CD4-positive, alpha-beta T cell (primary cell): ENCODE measurements at regions of chr2 and their contacts with region 1.

Region 1: DNA sequence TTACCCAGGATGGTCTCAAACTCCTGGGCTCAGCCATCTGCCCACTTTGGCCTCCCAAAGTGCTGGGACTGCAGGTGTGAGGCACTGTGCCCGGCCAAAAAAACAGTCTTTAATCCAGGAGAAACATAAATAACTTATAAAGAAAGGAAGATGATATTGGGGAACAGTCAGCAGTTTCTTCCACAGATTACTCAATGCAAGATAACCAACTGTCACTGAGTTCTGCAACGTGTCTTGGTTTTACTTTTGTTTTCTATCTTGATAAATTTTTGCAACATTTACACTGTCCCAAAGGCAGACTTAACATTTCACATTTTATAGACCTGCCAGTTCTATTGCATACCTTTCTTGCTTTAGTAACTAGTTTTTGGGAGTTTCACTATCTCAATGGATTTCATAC is 71.1 kb downstream of the ANKRD44 start:
- DNase-seq: peak in 3 of 14 experiments; percentile 49 to 65 (median 51)
- ATAC-seq: peak; percentile 32
- H3K4me3 ChIP-seq: peak overlapping the region; percentile 32
- H3K4me3 Mint-ChIP-seq: peak overlapping the region; percentile 88
- H3K27ac ChIP-seq: peak overlapping the region; percentile 74 to 75
- H3K27ac Mint-ChIP-seq: peak overlapping the region; percentile 91
- H3K4me1 ChIP-seq: peaks cover 77% of the 10 kb centered on the region
- H3K4me1 Mint-ChIP-seq: peaks cover 95% of the 10 kb centered on the region
- H3K27me3 ChIP-seq: no peaks in the 10 kb centered on the region
- H3K27me3 Mint-ChIP-seq: no peaks in the 10 kb centered on the region
- CTCF ChIP-seq: no peak

Region 2: DNA sequence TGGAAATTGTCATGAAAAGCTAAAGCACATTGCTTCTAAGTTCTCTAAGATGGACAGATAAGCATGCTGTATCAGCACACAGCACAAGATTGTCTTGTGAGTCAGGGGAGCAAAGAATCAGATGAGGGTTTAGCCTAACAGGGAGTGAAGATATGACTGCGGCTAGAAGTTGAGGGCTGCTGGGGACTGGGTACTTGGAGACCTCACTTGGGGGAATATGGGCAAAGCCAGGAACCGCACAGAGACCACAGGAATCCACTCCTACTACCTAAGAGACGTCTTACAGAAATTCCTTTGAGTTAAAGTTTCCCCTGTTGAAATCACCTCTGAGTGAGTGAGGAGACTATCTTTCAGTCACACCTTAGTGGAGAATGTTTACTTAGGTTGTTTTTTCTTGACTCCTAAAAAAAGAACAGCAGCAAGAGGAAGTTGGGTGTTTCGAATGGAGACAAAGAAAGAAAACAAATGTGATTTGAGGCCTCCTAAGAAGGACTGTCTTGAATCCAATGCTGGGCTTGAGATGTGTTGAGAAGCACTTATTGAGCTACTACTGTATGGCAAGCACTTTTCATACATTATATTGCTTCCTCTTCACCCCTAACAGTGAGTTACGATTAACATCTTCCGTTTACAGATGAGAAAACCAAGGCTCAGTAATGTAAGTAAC is 29.6 kb before region 1 on chr2:
- CTCF ChIA-PET with region 1: interaction called, 5 read pairs
- POLR2A ChIA-PET with region 1: interaction called, 38 read pairs
- intact Hi-C with region 1: loop called in 1 of 2 experiments (anchors 2 kb)
- DNase-seq: peak in 7 of 14 experiments; percentile 25 to 79 (median 45)
- ATAC-seq: peak; percentile 8
- H3K4me3 ChIP-seq: peak overlapping the region; percentile 15
- H3K4me3 Mint-ChIP-seq: peak overlapping the region; percentile 73
- H3K27ac ChIP-seq: peak overlapping the region; percentile 79 to 86
- H3K27ac Mint-ChIP-seq: peak overlapping the region; percentile 98
- H3K4me1 ChIP-seq: peaks cover 86% of the 10 kb centered on the region
- H3K4me1 Mint-ChIP-seq: peaks cover 98% of the 10 kb centered on the region
- H3K27me3 ChIP-seq: no peaks in the 10 kb centered on the region
- H3K27me3 Mint-ChIP-seq: no peaks in the 10 kb centered on the region
- CTCF ChIP-seq: no peak

Region 3: GRCh38 chr2:197223451-197223850 is 16.0 kb before region 1 on chr2:
- CTCF ChIA-PET with region 1: interaction called, 7 read pairs
- POLR2A ChIA-PET with region 1: interaction called, 12 read pairs
- intact Hi-C with region 1: loop called (anchors 2 kb)
- DNase-seq: no peak
- ATAC-seq: no peak
- H3K4me3 ChIP-seq: no peak overlapping the region
- H3K4me3 Mint-ChIP-seq: peak overlapping the region; percentile 28
- H3K27ac ChIP-seq: no peak overlapping the region
- H3K27ac Mint-ChIP-seq: peak overlapping the region; percentile 81
- H3K4me1 ChIP-seq: peaks cover 40% of the 10 kb centered on the region
- H3K4me1 Mint-ChIP-seq: peaks cover 84% of the 10 kb centered on the region
- H3K27me3 ChIP-seq: no peaks in the 10 kb centered on the region
- H3K27me3 Mint-ChIP-seq: no peaks in the 10 kb centered on the region
- CTCF ChIP-seq: no peak

Region 4: DNA sequence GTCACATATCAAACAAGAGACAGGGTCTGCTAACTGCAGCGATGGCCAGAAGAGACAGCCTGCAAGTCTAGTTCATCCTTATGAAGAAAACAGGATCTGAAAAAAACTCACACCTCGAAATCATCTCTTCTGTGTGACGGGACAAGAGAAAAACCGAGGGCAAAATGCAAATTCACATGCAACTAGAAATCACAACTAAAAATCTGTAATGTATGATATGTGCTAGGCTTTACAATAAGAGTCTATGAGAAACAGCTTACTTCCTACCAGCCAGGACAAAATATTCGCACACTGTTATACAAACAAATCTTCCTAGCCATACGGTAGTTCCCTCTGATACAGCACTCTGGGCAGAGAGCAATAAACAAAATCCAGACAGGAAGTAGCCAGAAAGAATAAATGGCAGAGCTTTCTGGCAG is 22.4 kb after region 1 on chr2:
- CTCF ChIA-PET with region 1: no interaction called
- POLR2A ChIA-PET with region 1: interaction called, 29 read pairs
- intact Hi-C with region 1: loop called in 1 of 2 experiments (anchors 1 kb)
- DNase-seq: peak in 2 of 14 experiments; percentile 49 to 52
- ATAC-seq: peak; percentile 38
- H3K4me3 ChIP-seq: no peak overlapping the region
- H3K4me3 Mint-ChIP-seq: peak overlapping the region; percentile 66
- H3K27ac ChIP-seq: peak overlapping the region; percentile 54 to 59
- H3K27ac Mint-ChIP-seq: peak overlapping the region; percentile 78
- H3K4me1 ChIP-seq: peaks cover 69% of the 10 kb centered on the region
- H3K4me1 Mint-ChIP-seq: peaks cover 85% of the 10 kb centered on the region
- H3K27me3 ChIP-seq: no peaks in the 10 kb centered on the region
- H3K27me3 Mint-ChIP-seq: no peaks in the 10 kb centered on the region
- CTCF ChIP-seq: no peak